GM12878 (cell line): ENCODE measurements at regions of chr9 and their contacts with region 1.

Region 1: DNA sequence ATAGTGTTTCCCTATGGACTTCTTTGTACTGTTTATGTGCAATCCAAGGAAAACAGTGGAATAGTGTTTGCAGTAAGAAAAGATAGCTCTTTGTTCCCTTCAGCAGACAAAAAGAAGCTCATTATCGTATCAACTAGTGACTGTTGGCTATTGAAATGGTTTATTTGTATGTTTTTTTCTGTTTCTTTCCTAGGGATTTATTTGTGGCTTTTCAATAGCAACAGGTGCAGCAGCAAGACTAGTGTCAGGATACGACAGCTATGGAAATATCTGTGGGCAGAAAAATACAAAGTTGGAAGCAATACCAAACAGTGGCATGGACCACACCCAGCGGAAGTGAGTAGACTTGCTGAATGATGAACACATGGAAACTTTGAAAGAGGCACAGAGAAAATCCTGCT is 65.1 kb downstream of the SLC44A1 start:
- DNase-seq: no peak
- ATAC-seq: no peak
- H3K4me3 ChIP-seq: no peak overlapping the region
- H3K27ac ChIP-seq: no peak overlapping the region
- H3K4me1 ChIP-seq: peaks cover 11% of the 10 kb centered on the region
- H3K27me3 ChIP-seq: no peaks in the 10 kb centered on the region
- CTCF ChIP-seq: no peak
- EP300 ChIP-seq: no peak
- POLR2A ChIP-seq: no peak
- RAD21 ChIP-seq: no peak

Region 2: DNA sequence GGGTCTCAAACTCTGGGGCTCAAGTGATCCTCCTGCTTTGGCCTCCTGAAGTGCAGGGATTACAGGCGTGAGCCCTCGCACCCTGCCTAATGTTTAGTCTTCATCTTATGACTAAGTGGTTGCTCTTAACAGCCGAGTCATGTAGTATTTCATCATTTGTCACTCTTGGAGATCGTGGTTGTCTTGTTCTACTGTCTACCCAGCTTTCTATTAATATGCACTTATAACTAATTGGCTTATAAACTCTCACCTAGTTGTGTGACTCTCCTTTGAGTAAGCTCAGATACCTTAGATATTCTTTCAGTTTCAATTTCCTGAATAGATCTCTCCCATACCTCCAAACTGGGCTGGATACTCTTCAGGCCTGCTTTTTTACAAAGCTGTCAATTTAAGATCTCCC is 45.2 kb before region 1 on chr9:
- CTCF ChIA-PET with region 1: interaction called, 3 read pairs
- POLR2A ChIA-PET with region 1: interaction called, 6 read pairs
- RAD21 ChIA-PET with region 1: interaction called, 6 read pairs
- SMC1A ChIA-PET with region 1: interaction called, 12 read pairs
- in situ Hi-C with region 1: no loop called
- intact Hi-C with region 1: no loop called
- DNase-seq: no peak
- ATAC-seq: peak; percentile 64
- H3K4me3 ChIP-seq: no peak overlapping the region
- H3K27ac ChIP-seq: peak overlapping the region; percentile 10; the same call in 1 of the 2 replicates
- H3K4me1 ChIP-seq: peaks cover 18% of the 10 kb centered on the region
- H3K27me3 ChIP-seq: no peaks in the 10 kb centered on the region
- CTCF ChIP-seq: no peak
- EP300 ChIP-seq: no peak
- POLR2A ChIP-seq: no peak
- RAD21 ChIP-seq: no peak

Region 3: DNA sequence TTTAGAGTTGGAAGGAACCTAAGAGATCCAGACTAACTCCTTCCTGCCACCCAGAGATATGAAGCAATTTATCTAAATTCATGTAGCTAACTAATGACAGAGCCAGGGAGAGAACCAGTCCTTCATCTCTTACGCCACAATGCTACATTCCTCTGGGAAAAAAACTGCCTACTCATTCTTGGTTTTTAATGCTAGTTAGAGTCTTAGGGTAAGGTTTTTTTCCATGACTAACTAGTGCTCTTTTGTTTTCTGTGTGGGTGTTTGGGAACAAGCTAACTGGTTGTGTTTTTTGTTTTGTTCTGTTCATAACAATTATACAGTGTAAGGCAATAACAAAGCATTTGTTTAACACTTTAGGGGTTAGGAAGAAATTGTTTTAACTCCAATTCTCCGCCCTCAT is 12.6 kb before region 1 on chr9:
- CTCF ChIA-PET with region 1: no interaction called
- POLR2A ChIA-PET with region 1: interaction called, 7 read pairs
- RAD21 ChIA-PET with region 1: interaction called, 7 read pairs
- SMC1A ChIA-PET with region 1: interaction called, 11 read pairs
- in situ Hi-C with region 1: no loop called
- intact Hi-C with region 1: no loop called
- DNase-seq: no peak
- ATAC-seq: no peak
- H3K4me3 ChIP-seq: no peak overlapping the region
- H3K27ac ChIP-seq: no peak overlapping the region
- H3K4me1 ChIP-seq: no peaks in the 10 kb centered on the region
- H3K27me3 ChIP-seq: no peaks in the 10 kb centered on the region
- CTCF ChIP-seq: no peak
- EP300 ChIP-seq: no peak
- POLR2A ChIP-seq: no peak
- RAD21 ChIP-seq: no peak